ENCODE measurements at regions of chr2 and their contacts with region 1.

Region 1: GRCh38 chr2:112947374-112947773 is 30.4 kb upstream of the IL36G start:
- H3K4me3 ChIP-seq: no peak overlapping the region
- H3K27ac ChIP-seq: no peak overlapping the region
- H3K4me1 ChIP-seq: no peaks in the 10 kb centered on the region
- CTCF ChIP-seq: no peak

Region 2: GRCh38 chr2:112054847-112055729 is 892.3 kb before region 1 on chr2 and contains the start of gene TMEM87B:
- CTCF ChIA-PET with region 1: no interaction called
- POLR2A ChIA-PET with region 1: no interaction called
- H3K4me3 ChIP-seq: peak within 1 kb of the TSS; percentile 86
- H3K27ac ChIP-seq: peak within 1 kb of the TSS; percentile 87
- H3K4me1 ChIP-seq: peaks cover 6% of the 10 kb centered on the region
- CTCF ChIP-seq: no peak

Region 3: GRCh38 chr2:112958428-112959108 is 11.2 kb after region 1 on chr2:
- CTCF ChIA-PET with region 1: interaction called, 53 read pairs
- POLR2A ChIA-PET with region 1: no interaction called
- H3K4me3 ChIP-seq: no peak overlapping the region
- H3K27ac ChIP-seq: no peak overlapping the region
- H3K4me1 ChIP-seq: no peaks in the 10 kb centered on the region
- CTCF ChIP-seq: no peak; the same call in 1 of the 2 replicates

Region 4: GRCh38 chr2:113098041-113098440 is 150.7 kb after region 1 on chr2:
- CTCF ChIA-PET with region 1: no interaction called
- POLR2A ChIA-PET with region 1: no interaction called
- H3K4me3 ChIP-seq: no peak overlapping the region
- H3K27ac ChIP-seq: no peak overlapping the region
- H3K4me1 ChIP-seq: no peaks in the 10 kb centered on the region
- CTCF ChIP-seq: no peak

Region 5: GRCh38 chr2:113148606-113149560 is 201.5 kb after region 1 on chr2:
- CTCF ChIA-PET with region 1: no interaction called
- POLR2A ChIA-PET with region 1: no interaction called
- H3K4me3 ChIP-seq: no peak overlapping the region
- H3K27ac ChIP-seq: no peak overlapping the region
- H3K4me1 ChIP-seq: no peaks in the 10 kb centered on the region
- CTCF ChIP-seq: no peak

Measured in HEK293 (cell line).